Caco-2 (cell line): ENCODE measurements at regions of chr13 and their contacts with region 1.

Region 1: GRCh38 chr13:44403461-44404056 is 29.9 kb downstream of the SERP2 start:
- DNase-seq: peak in 1 of 2 experiments; percentile 49
- H3K4me3 ChIP-seq: no peak overlapping the region
- H3K4me3 Mint-ChIP-seq: peak overlapping the region; percentile 54
- H3K27ac Mint-ChIP-seq: peak overlapping the region; percentile 79
- H3K4me1 ChIP-seq: peaks cover 46% of the 10 kb centered on the region
- H3K4me1 Mint-ChIP-seq: peaks cover 24% of the 10 kb centered on the region
- H3K27me3 ChIP-seq: no peaks in the 10 kb centered on the region
- H3K27me3 Mint-ChIP-seq: no peaks in the 10 kb centered on the region
- CTCF ChIP-seq: no peak

Region 2: GRCh38 chr13:44322928-44323327 is 80.6 kb before region 1 on chr13:
- CTCF ChIA-PET with region 1: no interaction called
- POLR2A ChIA-PET with region 1: no interaction called
- intact Hi-C with region 1: no loop called
- DNase-seq: no peak
- H3K4me3 ChIP-seq: no peak overlapping the region
- H3K4me3 Mint-ChIP-seq: no peak overlapping the region
- H3K27ac Mint-ChIP-seq: no peak overlapping the region
- H3K4me1 ChIP-seq: peaks cover 9% of the 10 kb centered on the region; the same call in 1 of the 2 replicates
- H3K4me1 Mint-ChIP-seq: no peaks in the 10 kb centered on the region
- H3K27me3 ChIP-seq: no peaks in the 10 kb centered on the region
- H3K27me3 Mint-ChIP-seq: no peaks in the 10 kb centered on the region
- CTCF ChIP-seq: no peak

Region 3: DNA sequence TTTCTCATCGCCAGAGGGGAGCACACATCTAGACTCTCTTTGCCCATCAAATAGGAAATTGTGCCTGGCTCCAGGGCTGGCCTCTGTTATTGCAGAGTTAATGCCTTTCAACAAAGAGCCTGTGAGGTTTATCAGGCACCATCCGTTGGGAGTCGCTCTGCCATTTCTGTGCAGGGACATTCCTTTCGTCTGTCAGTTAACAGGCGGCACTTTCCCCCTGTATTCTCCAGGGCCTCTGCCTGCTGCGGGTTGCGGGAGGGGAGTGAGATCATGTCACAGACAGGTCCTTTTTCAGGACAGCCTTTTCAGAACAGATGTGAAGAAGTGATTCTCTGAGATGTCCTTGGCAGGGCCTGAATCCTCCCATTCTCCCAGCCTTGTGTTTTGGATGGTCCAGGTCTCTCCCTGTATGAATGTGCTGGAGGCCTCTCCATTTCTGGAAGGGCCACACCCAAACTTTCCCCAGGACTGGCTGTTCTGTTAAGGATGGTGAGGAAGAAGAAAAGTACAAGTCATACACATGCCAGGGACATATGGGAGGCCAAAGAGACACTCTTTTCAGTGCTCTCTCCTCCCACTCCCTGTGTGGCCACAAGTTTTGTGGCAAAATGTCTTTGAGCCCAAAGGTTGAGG is 15.0 kb before region 1 on chr13:
- CTCF ChIA-PET with region 1: interaction called, 5 read pairs
- POLR2A ChIA-PET with region 1: no interaction called
- intact Hi-C with region 1: loop called (anchors 2 kb)
- DNase-seq: peak; percentile 51 to 68
- H3K4me3 ChIP-seq: no peak overlapping the region
- H3K4me3 Mint-ChIP-seq: no peak overlapping the region
- H3K27ac Mint-ChIP-seq: peak overlapping the region; percentile 76
- H3K4me1 ChIP-seq: peaks cover 56% of the 10 kb centered on the region
- H3K4me1 Mint-ChIP-seq: peaks cover 51% of the 10 kb centered on the region
- H3K27me3 ChIP-seq: no peaks in the 10 kb centered on the region
- H3K27me3 Mint-ChIP-seq: no peaks in the 10 kb centered on the region
- CTCF ChIP-seq: no peak